AG04450 (cell line): ENCODE measurements at regions of chr18 and their contacts with region 1.

Region 1: DNA sequence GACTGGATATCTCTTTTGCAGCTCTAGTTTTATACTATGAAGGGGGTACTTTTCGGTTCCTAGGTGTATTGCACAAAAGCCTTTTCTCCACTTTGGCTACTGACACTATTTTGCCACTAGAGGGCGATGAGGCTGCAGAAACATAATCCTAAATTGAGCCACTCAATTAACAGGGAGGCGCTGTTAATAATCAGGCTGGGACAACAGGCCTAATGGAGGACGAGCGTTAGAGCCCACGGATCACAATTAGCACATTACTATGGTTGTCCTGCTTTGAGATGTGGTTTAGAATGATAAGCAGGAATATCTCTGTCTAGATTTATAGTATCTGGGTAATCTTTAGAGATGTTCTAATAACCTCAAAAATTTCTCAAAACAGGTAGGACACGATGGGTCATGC is 62.2 kb upstream of the PMAIP1 start:
- DNase-seq: no peak
- H3K4me3 ChIP-seq: no peak overlapping the region
- H3K27ac ChIP-seq: no peak overlapping the region
- H3K27me3 ChIP-seq: no peaks in the 10 kb centered on the region
- CTCF ChIP-seq: peak; percentile 94

Region 2: GRCh38 chr18:59851784-59852399 is 14.3 kb after region 1 on chr18:
- CTCF ChIA-PET with region 1: interaction called, 13 read pairs
- POLR2A ChIA-PET with region 1: no interaction called
- DNase-seq: no peak
- H3K4me3 ChIP-seq: no peak overlapping the region
- H3K27ac ChIP-seq: no peak overlapping the region
- H3K27me3 ChIP-seq: no peaks in the 10 kb centered on the region
- CTCF ChIP-seq: no peak

Region 3: DNA sequence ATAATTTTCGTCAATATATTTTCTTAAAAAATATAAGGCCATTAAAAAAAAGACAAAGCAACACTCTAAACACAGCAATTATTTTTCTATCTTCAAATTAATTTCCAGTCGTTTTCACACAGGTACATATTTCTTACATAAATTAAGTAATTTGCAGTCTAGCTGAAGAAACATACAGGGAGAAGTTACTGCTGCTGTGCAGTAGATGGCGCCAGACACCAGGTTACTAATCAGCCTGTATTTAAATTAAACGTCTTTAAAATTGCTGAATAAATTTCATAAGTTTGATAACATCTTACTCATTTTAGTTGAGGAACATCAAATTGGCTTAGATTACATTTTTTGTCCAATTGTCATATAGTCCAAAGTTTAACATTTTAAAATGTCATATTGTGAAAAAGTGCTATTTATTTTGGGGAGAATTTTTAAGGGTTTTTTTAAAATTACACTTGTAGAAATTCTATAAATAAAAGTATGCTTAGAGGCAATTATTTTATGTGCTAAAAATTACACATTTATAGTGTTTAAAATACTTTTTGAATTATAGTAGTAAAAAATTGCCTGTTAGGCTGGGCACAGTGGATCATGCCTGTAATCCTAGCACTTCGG is 150.6 kb after region 1 on chr18:
- CTCF ChIA-PET with region 1: interaction called, 22 read pairs
- POLR2A ChIA-PET with region 1: no interaction called
- DNase-seq: peak; percentile 51
- H3K4me3 ChIP-seq: no peak overlapping the region
- H3K27ac ChIP-seq: no peak overlapping the region
- H3K27me3 ChIP-seq: peaks cover 4% of the 10 kb centered on the region
- CTCF ChIP-seq: peak; percentile 97